GM12878 (cell line): ENCODE measurements at regions of chr22 and their contacts with region 1.

Region 1: DNA sequence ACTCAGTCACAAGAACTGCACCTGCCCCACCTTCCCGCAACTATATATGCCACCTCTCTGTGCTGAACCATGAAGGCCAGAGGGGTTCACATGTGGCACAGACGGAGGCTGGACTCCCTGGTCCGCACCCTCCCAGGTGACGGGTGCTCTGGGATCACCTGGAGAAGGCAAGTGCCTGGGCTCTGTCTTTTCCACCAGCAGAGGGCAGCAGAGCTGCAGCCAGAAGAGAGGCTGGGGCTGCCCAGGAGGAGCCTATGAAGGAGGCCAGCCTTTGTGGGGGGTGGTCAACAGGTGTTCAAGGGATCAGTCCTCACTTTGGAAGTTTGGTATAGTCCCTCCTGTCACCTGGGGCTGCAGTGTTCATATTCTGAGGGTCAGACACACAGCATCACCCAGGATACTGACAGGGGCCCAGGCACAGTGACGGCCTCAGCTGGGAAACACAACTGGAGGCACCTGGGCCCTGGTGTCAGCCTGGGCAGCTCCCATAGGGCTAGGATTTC is 39.2 kb upstream of the IGLL5 start:
- DNase-seq: no peak
- ATAC-seq: peak; percentile 91
- H3K4me3 ChIP-seq: no peak overlapping the region
- H3K27ac ChIP-seq: no peak overlapping the region
- H3K4me1 ChIP-seq: peaks cover 18% of the 10 kb centered on the region
- H3K27me3 ChIP-seq: no peaks in the 10 kb centered on the region
- CTCF ChIP-seq: peak; percentile 49 to 79 (median 78)
- EP300 ChIP-seq: no peak
- POLR2A ChIP-seq: no peak
- RAD21 ChIP-seq: no peak

Region 2: DNA sequence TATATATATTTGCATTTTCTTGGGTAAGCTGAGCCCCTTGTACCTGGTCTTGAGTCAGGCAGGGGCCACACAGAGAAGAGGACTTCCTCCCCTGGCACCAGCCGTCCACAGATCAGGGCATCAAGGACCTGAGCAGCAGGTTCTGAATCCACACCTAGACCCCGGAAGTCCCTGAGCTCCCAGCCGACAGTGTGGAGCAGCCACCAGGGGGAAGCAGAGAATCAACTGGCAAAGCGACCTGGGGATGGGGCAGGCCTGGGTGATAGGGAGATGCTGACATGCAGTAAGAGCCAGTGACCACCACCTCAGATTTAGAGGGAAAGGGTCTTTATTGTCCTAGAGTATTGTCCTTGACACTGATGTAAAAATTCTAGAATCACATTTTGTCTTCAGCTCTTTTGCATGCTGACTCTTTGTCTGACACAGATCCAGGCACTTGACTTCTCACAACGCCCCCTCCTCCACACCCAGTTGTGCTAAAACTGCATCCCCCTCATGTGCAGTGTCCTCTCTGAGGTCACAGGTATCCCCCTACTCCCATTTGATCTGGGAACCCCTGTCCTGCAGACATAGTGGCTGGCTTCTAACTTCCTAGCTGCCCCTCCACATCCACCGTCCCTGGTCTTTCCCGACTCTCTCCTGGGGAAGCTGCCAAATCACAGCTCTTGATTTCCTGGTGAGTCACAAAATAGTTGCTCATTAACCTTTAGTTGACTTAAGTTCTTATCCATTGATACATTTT is 94.7 kb before region 1 on chr22:
- CTCF ChIA-PET with region 1: interaction called, 7 read pairs
- POLR2A ChIA-PET with region 1: no interaction called
- RAD21 ChIA-PET with region 1: interaction called, 3 read pairs
- SMC1A ChIA-PET with region 1: interaction called, 11 read pairs
- in situ Hi-C with region 1: no loop called
- intact Hi-C with region 1: no loop called
- DNase-seq: no peak
- ATAC-seq: peak; percentile 98
- H3K4me3 ChIP-seq: no peak overlapping the region
- H3K27ac ChIP-seq: no peak overlapping the region
- H3K4me1 ChIP-seq: no peaks in the 10 kb centered on the region
- H3K27me3 ChIP-seq: no peaks in the 10 kb centered on the region
- CTCF ChIP-seq: peak; percentile 38 to 76 (median 67); a peak in 5 of 6 replicates
- EP300 ChIP-seq: no peak
- POLR2A ChIP-seq: no peak
- RAD21 ChIP-seq: no peak

Region 3: DNA sequence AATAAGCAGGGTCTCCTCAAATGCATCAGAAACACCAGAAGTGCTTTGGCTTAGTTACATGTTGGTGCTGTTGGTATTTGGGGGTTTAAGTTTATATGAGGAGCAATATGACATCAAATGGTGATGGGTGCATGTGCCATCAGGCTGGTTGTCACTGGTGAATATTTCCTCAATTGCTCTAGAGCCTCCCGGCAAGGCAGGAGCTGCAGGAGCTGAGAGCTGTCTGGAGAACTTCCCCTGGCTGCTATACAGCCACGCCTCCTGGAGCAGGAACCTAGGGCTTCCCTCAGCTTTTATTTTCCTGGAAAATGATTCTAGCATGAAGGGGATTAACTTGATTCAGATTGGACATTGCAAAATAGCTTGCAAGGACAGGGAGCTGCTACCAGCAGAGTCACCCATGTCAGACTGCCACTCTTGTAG is 55.0 kb after region 1 on chr22:
- CTCF ChIA-PET with region 1: interaction called, 13 read pairs
- POLR2A ChIA-PET with region 1: interaction called, 3 read pairs
- RAD21 ChIA-PET with region 1: interaction called, 10 read pairs
- SMC1A ChIA-PET with region 1: interaction called, 10 read pairs
- in situ Hi-C with region 1: no loop called
- intact Hi-C with region 1: loop called (anchors 2 kb)
- DNase-seq: no peak
- ATAC-seq: peak; percentile 0; the same call in 1 of the 3 replicates
- H3K4me3 ChIP-seq: no peak overlapping the region
- H3K27ac ChIP-seq: peak overlapping the region; percentile 93
- H3K4me1 ChIP-seq: peaks cover 28% of the 10 kb centered on the region
- H3K27me3 ChIP-seq: no peaks in the 10 kb centered on the region
- CTCF ChIP-seq: no peak
- EP300 ChIP-seq: no peak
- POLR2A ChIP-seq: no peak
- RAD21 ChIP-seq: no peak

Region 4: GRCh38 chr22:22935546-22936157 is 87.2 kb after region 1 on chr22:
- CTCF ChIA-PET with region 1: interaction called, 551 read pairs
- POLR2A ChIA-PET with region 1: interaction called, 38 read pairs
- RAD21 ChIA-PET with region 1: interaction called, 137 read pairs
- SMC1A ChIA-PET with region 1: interaction called, 141 read pairs
- in situ Hi-C with region 1: loop called (anchors 5 kb)
- intact Hi-C with region 1: no loop called
- DNase-seq: peak; percentile 99
- ATAC-seq: peak; percentile 84
- H3K4me3 ChIP-seq: peak overlapping the region; percentile 24; the same call in 1 of the 2 replicates
- H3K27ac ChIP-seq: peak overlapping the region; percentile 99
- H3K4me1 ChIP-seq: peaks cover 92% of the 10 kb centered on the region
- H3K27me3 ChIP-seq: no peaks in the 10 kb centered on the region
- CTCF ChIP-seq: peak; percentile 53 to 83 (median 71)
- EP300 ChIP-seq: peak; percentile 100
- POLR2A ChIP-seq: no peak; the same call in 1 of the 2 replicates
- RAD21 ChIP-seq: peak; percentile 75

Region 5: GRCh38 chr22:22948651-22949571 is 100.5 kb after region 1 on chr22:
- CTCF ChIA-PET with region 1: interaction called, 551 read pairs
- POLR2A ChIA-PET with region 1: interaction called, 22 read pairs
- RAD21 ChIA-PET with region 1: interaction called, 174 read pairs
- SMC1A ChIA-PET with region 1: interaction called, 201 read pairs
- in situ Hi-C with region 1: loop called (anchors 5 kb)
- intact Hi-C with region 1: no loop called
- DNase-seq: no peak
- ATAC-seq: no peak
- H3K4me3 ChIP-seq: no peak overlapping the region
- H3K27ac ChIP-seq: no peak overlapping the region
- H3K4me1 ChIP-seq: peaks cover 34% of the 10 kb centered on the region
- H3K27me3 ChIP-seq: no peaks in the 10 kb centered on the region
- CTCF ChIP-seq: no peak
- EP300 ChIP-seq: no peak
- POLR2A ChIP-seq: no peak
- RAD21 ChIP-seq: no peak

Region 6: GRCh38 chr22:23128269-23129108 is 280.1 kb after region 1 on chr22:
- CTCF ChIA-PET with region 1: interaction called, 5 read pairs
- POLR2A ChIA-PET with region 1: no interaction called
- RAD21 ChIA-PET with region 1: interaction called, 4 read pairs
- SMC1A ChIA-PET with region 1: no interaction called
- in situ Hi-C with region 1: loop called (anchors 5 kb)
- intact Hi-C with region 1: loop called (anchors 10 kb)
- DNase-seq: no peak
- ATAC-seq: peak; percentile 97
- H3K4me3 ChIP-seq: no peak overlapping the region
- H3K27ac ChIP-seq: no peak overlapping the region
- H3K4me1 ChIP-seq: no peaks in the 10 kb centered on the region
- H3K27me3 ChIP-seq: no peaks in the 10 kb centered on the region
- CTCF ChIP-seq: peak; percentile 80 to 90 (median 82)
- EP300 ChIP-seq: no peak
- POLR2A ChIP-seq: no peak
- RAD21 ChIP-seq: peak; percentile 95